Sigmoid colon (tissue), 7 donors: ENCODE measurements at regions of chr19 and their contacts with region 1.

Region 1: GRCh38 chr19:40465557-40466150 is at the start of gene BLVRB:
- DNase-seq: peak; percentile 100
- H3K4me3 ChIP-seq: peak within 1 kb of the TSS; percentile 59 to 87 (median 70)
- H3K27ac ChIP-seq: peak within 1 kb of the TSS; percentile 88 to 96 (median 92)
- H3K4me1 ChIP-seq: peaks cover 0 to 46% (median 36%) of the 10 kb centered on the region in 4 donors
- H3K27me3 ChIP-seq: no peaks in the 10 kb centered on the region
- CTCF ChIP-seq: no peak
- EP300 ChIP-seq: no peak
- POLR2A ChIP-seq: peak; percentile 58 to 92
- total RNA-seq, gene BLVRB: 115 to 232 (median 210) TPM

Region 2: GRCh38 chr19:40110570-40110969 is 355.1 kb before region 1 on chr19:
- intact Hi-C with region 1: no loop called
- DNase-seq: no peak
- H3K4me3 ChIP-seq: no peak overlapping the region
- H3K27ac ChIP-seq: no peak overlapping the region
- H3K4me1 ChIP-seq: no peaks in the 10 kb centered on the region
- H3K27me3 ChIP-seq: no peaks in the 10 kb centered on the region
- CTCF ChIP-seq: no peak
- EP300 ChIP-seq: no peak
- POLR2A ChIP-seq: no peak

Region 3: GRCh38 chr19:40305403-40305802 is 160.3 kb before region 1 on chr19:
- intact Hi-C with region 1: loop called (anchors 5 kb)
- DNase-seq: peak; percentile 89
- H3K4me3 ChIP-seq: no peak overlapping the region
- H3K27ac ChIP-seq: no peak overlapping the region
- H3K4me1 ChIP-seq: peaks cover 0 to 3% (median 0%) of the 10 kb centered on the region in 4 donors
- H3K27me3 ChIP-seq: no peaks in the 10 kb centered on the region
- CTCF ChIP-seq: peak; percentile 40 to 62 (median 58)
- EP300 ChIP-seq: no peak
- POLR2A ChIP-seq: no peak

Region 4: DNA sequence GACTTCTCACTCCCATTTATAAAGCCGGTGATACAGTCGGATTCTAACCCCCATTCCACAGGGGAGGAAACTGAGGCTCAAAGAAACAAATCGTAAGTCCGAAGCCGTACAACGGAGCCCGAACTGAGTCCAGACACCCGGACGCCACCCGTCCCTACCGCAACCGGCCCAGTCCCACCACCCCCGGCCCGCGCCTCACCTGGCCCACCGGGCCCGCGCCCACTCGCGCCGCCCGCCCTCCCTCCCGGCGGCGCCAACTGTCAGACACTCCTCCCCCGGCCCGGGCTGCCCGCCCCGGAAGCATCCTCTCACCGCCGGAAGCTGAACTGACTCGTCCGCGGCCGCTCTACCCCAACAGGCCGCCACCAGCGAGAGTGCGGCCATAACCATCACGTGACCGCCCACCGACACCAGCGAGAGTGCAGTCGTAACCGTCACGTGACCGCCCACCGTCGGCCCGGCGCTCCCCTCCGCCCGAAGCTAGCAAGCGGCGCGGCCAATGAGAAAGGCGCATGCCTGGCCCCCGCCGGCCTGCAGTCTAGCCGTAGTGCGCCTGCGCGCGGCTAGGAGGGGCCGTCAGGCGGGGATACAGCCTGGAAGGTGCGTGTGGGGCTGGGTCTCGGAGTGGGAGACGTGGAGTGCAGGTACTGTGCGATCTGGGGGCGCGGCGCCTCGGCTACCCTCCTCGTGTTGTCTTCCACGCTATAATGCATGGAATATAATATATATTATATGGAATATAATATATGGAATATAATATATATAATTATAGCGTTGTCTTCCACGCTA is 117.3 kb before region 1 on chr19 and contains the starts of genes C19orf47 and PLD3:
- intact Hi-C with region 1: loop called (anchors 2 kb)
- DNase-seq: peak; percentile 100
- H3K4me3 ChIP-seq: peak within 1 kb of the TSS; percentile 69 to 90 (median 76)
- H3K27ac ChIP-seq: peak within 1 kb of the TSS; percentile 78 to 84 (median 84)
- H3K4me1 ChIP-seq: peaks cover 0 to 30% (median 22%) of the 10 kb centered on the region in 4 donors
- H3K27me3 ChIP-seq: no peaks in the 10 kb centered on the region
- CTCF ChIP-seq: no peak
- EP300 ChIP-seq: peak in 1 of 4 donors; percentile 80
- POLR2A ChIP-seq: peak; percentile 91 to 93
- total RNA-seq, gene C19orf47: 8.9 to 12.8 (median 11.5) TPM
- total RNA-seq, gene PLD3: 164 to 270 (median 230) TPM

Region 5: DNA sequence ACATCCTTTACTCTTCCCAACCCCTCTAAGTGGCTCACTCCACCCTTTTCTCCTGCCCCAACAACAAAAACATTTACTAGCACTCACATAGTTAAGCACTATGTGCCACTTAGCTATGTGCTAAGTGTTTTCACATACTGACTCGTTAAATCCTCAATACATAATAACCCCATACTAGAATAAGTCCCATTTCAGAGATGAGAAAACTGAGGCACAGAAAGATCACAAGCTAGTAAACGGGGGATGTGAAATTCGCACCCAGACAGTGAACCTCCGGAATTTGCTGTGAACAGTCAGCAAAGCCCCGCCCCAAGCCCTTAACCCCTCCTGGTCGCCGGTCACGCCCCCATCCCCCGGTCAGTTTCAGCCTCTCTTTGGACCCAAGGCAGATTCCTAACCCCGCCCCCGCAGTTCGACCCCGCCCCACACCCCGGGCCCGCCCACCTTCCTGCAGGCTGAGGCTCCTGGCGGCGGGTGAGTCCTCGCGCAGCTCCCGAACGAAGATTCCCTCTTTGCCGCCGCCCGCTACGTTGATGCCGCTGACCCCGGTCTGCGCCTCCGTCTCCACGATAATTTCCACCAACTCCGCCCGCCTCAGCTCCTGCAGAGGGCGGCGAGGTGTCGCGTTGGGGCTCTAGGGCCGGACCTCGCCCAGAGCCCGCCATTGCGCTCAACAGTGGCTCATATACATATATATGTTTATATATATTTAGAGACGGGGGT is 62.2 kb before region 1 on chr19:
- intact Hi-C with region 1: loop called (anchors 5 kb)
- DNase-seq: peak; percentile 95
- H3K4me3 ChIP-seq: peak overlapping the region; percentile 41 to 68 (median 59)
- H3K27ac ChIP-seq: peak overlapping the region; percentile 86 to 96 (median 90)
- H3K4me1 ChIP-seq: peaks cover 0 to 26% (median 12%) of the 10 kb centered on the region in 4 donors
- H3K27me3 ChIP-seq: no peaks in the 10 kb centered on the region
- CTCF ChIP-seq: no peak
- EP300 ChIP-seq: no peak
- POLR2A ChIP-seq: peak in 1 of 2 donors; percentile 15

Region 6: GRCh38 chr19:40425450-40426287 is 40.0 kb before region 1 on chr19 and contains the start of gene SERTAD1:
- intact Hi-C with region 1: loop called (anchors 1 kb)
- DNase-seq: peak; percentile 100
- H3K4me3 ChIP-seq: peak within 1 kb of the TSS; percentile 61 to 98 (median 86)
- H3K27ac ChIP-seq: peak within 1 kb of the TSS; percentile 95 to 100 (median 99)
- H3K4me1 ChIP-seq: peaks cover 0 to 47% (median 37%) of the 10 kb centered on the region in 4 donors
- H3K27me3 ChIP-seq: no peaks in the 10 kb centered on the region
- CTCF ChIP-seq: peak; percentile 64 to 93 (median 88)
- EP300 ChIP-seq: no peak
- POLR2A ChIP-seq: peak; percentile 94 to 98
- total RNA-seq, gene SERTAD1: 10.2 to 29.2 (median 15.7) TPM

Region 7: GRCh38 chr19:40502647-40503319 is 37.1 kb after region 1 on chr19:
- intact Hi-C with region 1: no loop called
- DNase-seq: no peak
- H3K4me3 ChIP-seq: no peak overlapping the region
- H3K27ac ChIP-seq: no peak overlapping the region
- H3K4me1 ChIP-seq: no peaks in the 10 kb centered on the region
- H3K27me3 ChIP-seq: no peaks in the 10 kb centered on the region
- CTCF ChIP-seq: no peak
- EP300 ChIP-seq: no peak
- POLR2A ChIP-seq: no peak

Region 8: DNA sequence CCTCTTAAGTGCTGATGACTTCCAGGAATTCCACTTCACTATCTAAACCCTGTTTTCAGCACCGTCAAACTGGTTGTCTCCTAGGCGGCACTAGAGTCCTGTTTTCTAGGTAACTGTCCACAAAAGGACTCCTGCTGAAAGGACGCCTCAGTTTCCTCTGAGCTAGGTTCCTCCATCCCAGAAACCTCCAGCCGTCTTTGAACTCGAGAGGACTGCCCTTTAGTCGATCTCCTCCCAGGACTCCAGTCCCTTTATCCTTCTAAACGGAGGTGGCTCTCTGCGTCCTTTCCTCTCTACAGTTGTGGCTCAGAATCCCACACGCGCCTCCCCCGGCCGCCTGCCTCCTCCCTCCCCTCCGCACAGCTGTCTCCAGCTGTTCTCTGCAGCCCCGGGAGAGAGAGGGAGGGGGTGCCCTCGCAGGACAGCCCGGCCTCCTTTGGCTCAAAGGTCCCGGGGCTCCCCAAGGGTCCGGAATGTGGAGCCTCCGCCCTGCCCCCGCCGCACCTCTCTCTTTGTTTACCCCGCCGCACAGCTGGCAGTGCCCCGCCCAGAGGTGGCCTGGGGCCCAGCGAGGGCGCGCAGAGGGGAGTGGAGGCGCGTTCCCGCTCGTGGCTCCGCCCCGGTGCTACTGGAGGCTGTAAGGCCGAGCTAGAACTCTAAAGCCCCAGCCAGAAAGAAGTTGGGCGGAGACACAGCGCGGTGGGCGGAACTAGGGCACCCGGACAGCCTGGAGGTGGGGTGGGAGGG is 137.9 kb after region 1 on chr19:
- intact Hi-C with region 1: loop called (anchors 5 kb)
- DNase-seq: peak; percentile 99
- H3K4me3 ChIP-seq: peak overlapping the region; percentile 37 to 61 (median 53)
- H3K27ac ChIP-seq: peak overlapping the region; percentile 71 to 85 (median 84)
- H3K4me1 ChIP-seq: peaks cover 0 to 73% (median 69%) of the 10 kb centered on the region in 4 donors
- H3K27me3 ChIP-seq: peaks cover 3 to 18% (median 11%) of the 10 kb centered on the region in 3 donors
- CTCF ChIP-seq: no peak
- EP300 ChIP-seq: no peak
- POLR2A ChIP-seq: peak in 1 of 2 donors; percentile 30